ENCODE measurements at regions of chr5 and their contacts with region 1.

Region 1: DNA sequence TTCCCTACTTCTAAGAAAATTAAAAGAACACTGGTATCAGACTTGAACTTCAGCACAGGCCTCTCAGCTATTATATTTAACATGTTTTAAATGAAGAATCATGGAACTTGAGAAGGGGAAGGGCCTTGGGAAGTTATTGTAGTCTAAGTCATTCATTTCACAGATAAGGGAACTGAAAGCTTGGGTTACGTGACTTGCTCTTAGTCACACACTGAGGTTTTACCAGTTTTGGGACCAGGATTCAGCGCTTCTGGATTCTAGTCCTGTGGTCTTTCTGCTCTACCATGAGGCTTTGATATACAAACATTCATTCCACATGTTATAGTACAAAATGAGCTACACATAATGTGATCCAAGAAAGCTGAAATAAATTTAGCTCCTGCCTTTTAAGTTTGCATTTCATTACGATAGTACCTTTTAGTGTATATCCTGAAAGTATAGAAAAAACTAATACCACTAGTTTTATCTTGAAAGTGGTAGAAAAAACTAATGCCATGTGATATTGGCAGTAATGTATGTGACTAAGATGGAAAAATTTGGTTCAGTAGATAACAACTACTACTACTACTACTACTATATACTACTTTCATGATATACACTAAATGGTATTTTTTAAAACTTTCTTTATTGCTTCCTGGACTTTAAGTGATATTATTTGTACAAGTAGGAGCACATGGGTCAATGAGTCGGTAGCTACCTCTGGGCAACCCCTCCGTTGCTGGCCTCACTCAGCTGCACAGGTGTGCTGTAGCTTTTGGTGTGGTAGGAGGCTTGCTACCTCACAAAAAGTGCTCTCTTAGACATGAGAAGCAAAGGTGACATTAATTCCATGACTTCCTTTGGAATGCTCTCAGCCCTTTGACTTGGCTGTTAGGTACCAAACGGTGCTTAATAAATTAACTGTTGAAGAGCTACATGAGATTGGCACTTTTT is 40.7 kb downstream of the F2RL2 start:
- DNase-seq: no peak
- ATAC-seq: no peak
- H3K4me3 Mint-ChIP-seq: no peak overlapping the region
- H3K27ac Mint-ChIP-seq: no peak overlapping the region
- H3K4me1 Mint-ChIP-seq: peaks cover 2% of the 10 kb centered on the region
- H3K27me3 Mint-ChIP-seq: no peaks in the 10 kb centered on the region

Region 2: GRCh38 chr5:76529464-76530344 is 52.8 kb before region 1 on chr5:
- CTCF ChIA-PET with region 1: no interaction called
- POLR2A ChIA-PET with region 1: no interaction called
- DNase-seq: no peak
- ATAC-seq: no peak
- H3K4me3 Mint-ChIP-seq: no peak overlapping the region
- H3K27ac Mint-ChIP-seq: no peak overlapping the region
- H3K4me1 Mint-ChIP-seq: peaks cover 29% of the 10 kb centered on the region
- H3K27me3 Mint-ChIP-seq: no peaks in the 10 kb centered on the region

Region 3: DNA sequence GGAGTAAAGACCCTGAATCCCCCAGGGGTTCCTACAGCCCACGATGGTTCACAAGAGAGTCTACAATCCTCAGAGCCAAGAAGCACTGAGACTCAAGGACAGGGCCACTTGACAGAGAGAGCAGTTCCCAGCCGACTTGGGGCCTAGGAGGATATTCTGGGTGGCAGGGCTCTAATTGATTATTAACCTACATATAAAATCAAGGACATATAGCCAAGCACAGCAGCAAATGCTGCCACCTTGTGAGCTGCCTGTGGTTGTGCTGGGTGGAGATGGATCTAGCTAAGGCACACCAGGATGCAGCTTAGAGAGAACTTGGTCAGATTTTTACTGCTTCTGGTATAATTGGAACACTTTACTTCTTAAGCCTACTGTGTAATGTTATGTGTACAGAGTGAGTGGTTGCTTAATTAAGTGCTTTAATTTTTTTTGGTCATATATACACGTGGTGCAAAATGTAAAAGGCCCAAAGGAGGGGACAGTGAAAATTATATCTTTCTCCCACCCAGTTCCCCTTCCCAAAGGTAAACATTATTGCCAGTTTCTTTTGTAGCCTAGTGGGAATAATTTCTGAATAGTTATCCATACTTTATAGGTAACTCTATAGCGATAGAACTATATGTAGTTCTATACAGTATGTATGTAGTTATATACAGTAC is 38.1 kb before region 1 on chr5:
- CTCF ChIA-PET with region 1: interaction called, 36 read pairs
- POLR2A ChIA-PET with region 1: interaction called, 3 read pairs
- DNase-seq: peak; percentile 67
- ATAC-seq: peak; percentile 42
- H3K4me3 Mint-ChIP-seq: peak overlapping the region; percentile 61
- H3K27ac Mint-ChIP-seq: peak overlapping the region; percentile 91
- H3K4me1 Mint-ChIP-seq: peaks cover 62% of the 10 kb centered on the region
- H3K27me3 Mint-ChIP-seq: no peaks in the 10 kb centered on the region

Measured in activated CD8-positive, alpha-beta T cell treated with anti-CD3 and anti-CD28 coated beads, Interleukin-2, amount 10 ng/mL, durations not matched to agents 7 days and 5 days (primary cell).